Posterior vena cava (tissue), 2 donors: ENCODE measurements at regions of chr10 and their contacts with region 1.

Region 1: DNA sequence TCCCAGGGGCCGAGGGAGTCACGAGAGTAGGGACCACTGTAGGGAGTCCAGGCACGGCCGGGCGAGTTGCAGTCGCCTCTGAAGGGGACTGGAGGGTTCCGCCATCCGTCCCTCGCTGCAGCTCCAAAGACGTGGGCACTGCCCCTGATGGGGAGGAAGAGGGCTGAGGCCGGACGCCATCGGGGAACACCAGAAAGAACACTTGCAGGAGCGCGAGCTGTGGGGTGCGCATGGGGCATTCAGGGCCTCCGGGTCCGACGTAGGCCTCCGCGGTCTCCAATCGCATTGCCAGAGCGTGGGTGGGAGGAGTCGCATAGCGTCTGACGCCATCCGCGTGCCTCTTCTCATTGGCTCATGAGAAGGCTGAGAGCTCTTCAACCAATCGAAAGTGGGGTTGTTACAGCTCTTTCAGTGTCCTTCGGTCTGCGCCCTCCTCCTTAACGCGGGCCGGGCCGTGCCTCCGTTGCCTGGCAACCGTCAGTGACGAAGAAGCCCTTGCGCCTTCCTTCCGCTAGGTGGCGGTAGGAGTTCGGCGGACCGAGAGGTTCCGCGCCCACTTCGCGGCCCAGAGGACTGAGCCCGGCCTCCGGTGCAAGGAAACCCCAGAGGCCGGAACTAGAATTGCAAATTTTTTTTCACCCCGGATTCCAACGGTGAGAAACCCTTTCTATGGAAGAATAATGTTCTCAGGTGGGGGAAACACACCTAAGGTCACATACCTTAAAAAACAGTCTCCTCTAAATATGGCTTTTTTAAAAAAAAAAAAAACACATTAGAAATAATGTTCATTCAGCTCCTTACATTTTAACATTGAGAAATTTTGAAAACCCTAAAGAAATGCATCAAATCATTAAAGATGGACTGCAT is at the start of gene TCTN3:
- DNase-seq: peak; percentile 98
- total RNA-seq, gene TCTN3: 25.4 to 26.9 TPM

Region 2: DNA sequence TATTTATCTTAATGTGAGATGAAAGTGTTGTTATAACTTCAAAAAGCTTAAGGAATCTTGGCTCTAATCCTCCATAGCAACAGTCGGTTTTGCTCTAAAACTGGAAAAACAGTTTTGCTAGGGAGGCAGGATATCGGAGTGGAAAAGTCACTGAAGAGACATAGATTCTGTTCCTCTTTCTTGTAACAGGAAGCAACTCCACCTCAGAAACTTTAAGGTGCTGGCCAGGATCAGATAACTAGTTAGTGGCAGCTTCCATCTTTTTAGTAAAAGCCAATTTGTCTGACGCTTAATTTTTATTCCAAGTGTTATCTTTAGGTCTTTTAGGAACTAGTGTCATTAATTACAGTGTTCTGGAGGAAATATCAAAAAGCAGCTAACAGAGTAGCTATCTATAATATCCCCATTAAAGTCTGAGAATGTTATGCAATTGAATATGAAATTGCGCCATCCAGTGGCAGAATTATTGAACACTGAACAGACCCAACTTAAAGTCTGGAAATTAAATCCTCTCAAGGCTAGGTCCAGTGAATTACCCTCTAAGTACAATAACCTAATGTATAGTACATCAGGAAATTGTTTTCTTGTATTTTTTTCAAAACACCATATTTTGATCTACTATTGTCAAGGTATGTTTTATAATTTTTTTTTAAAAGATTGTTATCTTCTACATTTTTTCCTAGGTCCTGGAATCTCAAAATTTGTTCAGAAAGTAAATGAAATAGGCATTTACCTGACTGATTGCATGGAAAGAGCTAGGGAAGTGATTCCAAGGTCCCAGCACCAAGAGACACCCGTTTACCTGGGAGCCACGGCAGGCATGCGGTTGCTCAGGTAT is 148.0 kb after region 1 on chr10:
- intact Hi-C with region 1: loop called in 1 of 2 experiments (anchors 5 kb)
- DNase-seq: no peak